Transverse colon (tissue), 4 donors: ENCODE measurements at regions of chr22 and their contacts with region 1.

Region 1: DNA sequence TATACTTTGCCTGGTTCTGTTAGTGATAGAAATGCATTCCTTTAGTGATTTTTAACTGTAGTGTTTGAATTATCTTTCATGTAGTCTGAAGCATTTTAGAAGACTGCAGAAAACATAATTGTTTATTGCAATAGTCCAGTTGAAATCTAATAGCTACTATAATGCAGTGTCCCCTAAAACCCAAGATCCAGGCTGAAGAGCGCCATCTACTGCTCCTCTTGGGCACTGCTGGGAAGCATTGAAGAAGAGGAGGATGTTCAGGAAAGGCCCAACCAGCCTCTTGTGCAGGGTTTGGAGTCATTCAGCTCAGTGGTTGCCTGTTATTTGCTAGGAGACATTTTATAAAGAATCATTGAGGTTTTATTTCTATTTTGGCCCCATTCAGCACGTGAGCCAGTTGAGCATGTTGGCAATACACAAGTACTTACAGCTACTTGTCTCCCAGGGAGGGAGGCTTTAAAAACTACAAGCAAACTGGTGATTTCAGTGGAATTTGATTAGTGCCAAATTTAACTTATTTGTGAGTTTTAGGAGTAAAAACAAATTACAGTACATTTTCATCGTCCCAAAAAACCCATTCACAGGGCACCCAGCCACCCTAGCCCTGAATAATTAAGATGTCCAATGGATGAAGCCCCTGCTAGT is 74.9 kb upstream of the HORMAD2 start:
- DNase-seq: peak; percentile 82
- H3K4me3 ChIP-seq: no peak overlapping the region
- H3K27ac ChIP-seq: no peak overlapping the region
- H3K4me1 ChIP-seq: peaks cover 8 to 47% (median 24%) of the 10 kb centered on the region in 4 donors
- H3K27me3 ChIP-seq: no peaks in the 10 kb centered on the region
- CTCF ChIP-seq: peak; percentile 90 to 96 (median 93)
- EP300 ChIP-seq: no peak
- POLR2A ChIP-seq: no peak

Region 2: GRCh38 chr22:29625090-29625825 is 380.1 kb before region 1 on chr22:
- in situ Hi-C with region 1: loop called in 2 of 4 experiments (anchors 25 kb)
- intact Hi-C with region 1: no loop called
- DNase-seq: peak; percentile 34
- H3K4me3 ChIP-seq: no peak overlapping the region
- H3K27ac ChIP-seq: peak overlapping the region; percentile 24 to 62 (median 46)
- H3K4me1 ChIP-seq: peaks cover 12 to 55% (median 24%) of the 10 kb centered on the region in 4 donors
- H3K27me3 ChIP-seq: no peaks in the 10 kb centered on the region
- CTCF ChIP-seq: peak; percentile 68 to 91 (median 81)
- EP300 ChIP-seq: no peak
- POLR2A ChIP-seq: no peak

Region 3: GRCh38 chr22:29689880-29690213 is 315.5 kb before region 1 on chr22:
- in situ Hi-C with region 1: loop called in 1 of 4 experiments (anchors 10 kb)
- intact Hi-C with region 1: no loop called
- DNase-seq: peak; percentile 58
- H3K4me3 ChIP-seq: no peak overlapping the region
- H3K27ac ChIP-seq: no peak overlapping the region
- H3K4me1 ChIP-seq: peaks cover 0 to 8% (median 2%) of the 10 kb centered on the region in 4 donors
- H3K27me3 ChIP-seq: no peaks in the 10 kb centered on the region
- CTCF ChIP-seq: peak; percentile 64 to 72 (median 70)
- EP300 ChIP-seq: no peak
- POLR2A ChIP-seq: no peak

Region 4: GRCh38 chr22:29820961-29821789 is 184.2 kb before region 1 on chr22:
- in situ Hi-C with region 1: loop called in 3 of 4 experiments (anchors 25 kb)
- intact Hi-C with region 1: no loop called
- DNase-seq: peak; percentile 87
- H3K4me3 ChIP-seq: no peak overlapping the region
- H3K27ac ChIP-seq: peak overlapping the region; percentile 53 to 68 (median 65)
- H3K4me1 ChIP-seq: peaks cover 0 to 18% (median 0%) of the 10 kb centered on the region in 4 donors
- H3K27me3 ChIP-seq: no peaks in the 10 kb centered on the region
- CTCF ChIP-seq: peak in 2 of 5 experiments; percentile 11 to 20
- EP300 ChIP-seq: no peak
- POLR2A ChIP-seq: no peak

Region 5: GRCh38 chr22:29837780-29838598 is 167.3 kb before region 1 on chr22 and contains the start of gene ASCC2:
- in situ Hi-C with region 1: loop called in 2 of 4 experiments (anchors 25 kb)
- intact Hi-C with region 1: loop called (anchors 10 kb)
- DNase-seq: peak; percentile 100
- H3K4me3 ChIP-seq: peak within 1 kb of the TSS; percentile 87 to 100 (median 92)
- H3K27ac ChIP-seq: peak within 1 kb of the TSS; percentile 73 to 90 (median 88)
- H3K4me1 ChIP-seq: peaks cover 8 to 34% (median 14%) of the 10 kb centered on the region in 4 donors
- H3K27me3 ChIP-seq: no peaks in the 10 kb centered on the region
- CTCF ChIP-seq: peak in 2 of 5 experiments; percentile 58 to 62
- EP300 ChIP-seq: no peak
- POLR2A ChIP-seq: peak; percentile 82
- total RNA-seq, gene ASCC2: 46.8 to 69.4 (median 62.2) TPM

Region 6: DNA sequence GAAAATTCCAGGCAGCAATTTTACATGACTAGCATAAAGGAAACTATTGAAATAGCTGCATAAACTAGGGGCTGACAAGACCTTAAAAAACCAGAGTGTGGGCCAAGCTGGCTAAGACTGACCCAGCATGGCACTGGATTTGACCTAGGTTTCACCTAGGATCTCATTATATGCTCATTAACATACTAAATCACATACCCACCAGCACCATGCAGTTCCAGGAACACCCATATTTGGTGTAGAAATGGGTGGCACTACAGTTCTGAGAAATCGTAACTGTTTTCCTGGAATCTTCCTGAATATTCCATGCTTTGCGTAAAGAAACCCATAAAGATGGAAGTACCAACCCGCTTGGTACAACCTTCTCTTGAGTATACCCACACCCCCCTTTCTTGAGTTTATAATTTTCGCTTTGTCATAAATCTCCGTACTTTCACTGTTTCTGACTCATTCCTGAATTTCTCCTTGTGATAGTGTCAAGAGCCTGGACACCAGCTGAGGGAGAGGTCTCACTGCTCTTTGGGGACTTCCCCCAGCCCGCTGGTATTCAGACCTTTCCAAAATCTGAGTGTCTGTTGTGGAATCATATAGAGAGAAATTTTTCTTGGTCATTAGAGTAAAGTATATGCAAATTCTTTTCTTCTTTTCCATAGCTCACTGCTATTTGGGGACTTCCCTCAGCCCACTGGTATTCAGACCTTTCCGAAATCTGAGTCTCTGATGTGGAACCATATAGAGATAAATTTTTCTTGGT is 67.2 kb before region 1 on chr22:
- in situ Hi-C with region 1: no loop called
- intact Hi-C with region 1: no loop called
- DNase-seq: no peak
- H3K4me3 ChIP-seq: no peak overlapping the region
- H3K27ac ChIP-seq: no peak overlapping the region
- H3K4me1 ChIP-seq: peaks cover 5 to 36% (median 12%) of the 10 kb centered on the region in 4 donors
- H3K27me3 ChIP-seq: no peaks in the 10 kb centered on the region
- CTCF ChIP-seq: no peak
- EP300 ChIP-seq: no peak
- POLR2A ChIP-seq: no peak